GM12878 (cell line): ENCODE measurements at regions of chr6 and their contacts with region 1.

Region 1: GRCh38 chr6:89940225-89941027 is 46.2 kb downstream of the GJA10 start:
- DNase-seq: peak; percentile 21
- ATAC-seq: peak; percentile 99
- H3K4me3 ChIP-seq: no peak overlapping the region
- H3K27ac ChIP-seq: no peak overlapping the region
- H3K4me1 ChIP-seq: no peaks in the 10 kb centered on the region
- H3K27me3 ChIP-seq: no peaks in the 10 kb centered on the region; a peak in 3 of 4 replicates
- CTCF ChIP-seq: peak; percentile 64 to 83 (median 71)
- EP300 ChIP-seq: no peak
- POLR2A ChIP-seq: no peak
- RAD21 ChIP-seq: peak; percentile 92

Region 2: GRCh38 chr6:90179190-90180169 is 239.1 kb after region 1 on chr6:
- CTCF ChIA-PET with region 1: interaction called, 12 read pairs
- POLR2A ChIA-PET with region 1: no interaction called
- RAD21 ChIA-PET with region 1: no interaction called
- SMC1A ChIA-PET with region 1: interaction called, 4 read pairs
- in situ Hi-C with region 1: no loop called
- intact Hi-C with region 1: loop called (anchors 5 kb)
- DNase-seq: no peak
- ATAC-seq: no peak
- H3K4me3 ChIP-seq: no peak overlapping the region
- H3K27ac ChIP-seq: no peak overlapping the region
- H3K4me1 ChIP-seq: peaks cover 3% of the 10 kb centered on the region; the same call in 1 of the 2 replicates
- H3K27me3 ChIP-seq: peaks cover 0 to 6% of the 10 kb centered on the region in 2 experiments; a peak in 1 of 4 replicates
- CTCF ChIP-seq: peak in 2 of 3 experiments; percentile 11 to 27; a peak in 3 of 6 replicates
- EP300 ChIP-seq: no peak
- POLR2A ChIP-seq: no peak
- RAD21 ChIP-seq: 0 out of 2 replicates have a peak, but pooled peaks have one; percentile 10

Region 3: GRCh38 chr6:90328004-90328403 is 387.6 kb after region 1 on chr6:
- CTCF ChIA-PET with region 1: no interaction called
- POLR2A ChIA-PET with region 1: no interaction called
- RAD21 ChIA-PET with region 1: no interaction called
- SMC1A ChIA-PET with region 1: no interaction called
- in situ Hi-C with region 1: no loop called
- intact Hi-C with region 1: no loop called
- DNase-seq: no peak
- ATAC-seq: no peak
- H3K4me3 ChIP-seq: no peak overlapping the region
- H3K27ac ChIP-seq: no peak overlapping the region
- H3K4me1 ChIP-seq: no peaks in the 10 kb centered on the region
- H3K27me3 ChIP-seq: peaks cover 0 to 3% of the 10 kb centered on the region in 2 experiments; a peak in 1 of 4 replicates
- CTCF ChIP-seq: no peak
- EP300 ChIP-seq: no peak
- POLR2A ChIP-seq: no peak
- RAD21 ChIP-seq: no peak